Posterior vena cava (tissue), 2 donors: ENCODE measurements at regions of chrX and their contacts with region 1.

Region 1: DNA sequence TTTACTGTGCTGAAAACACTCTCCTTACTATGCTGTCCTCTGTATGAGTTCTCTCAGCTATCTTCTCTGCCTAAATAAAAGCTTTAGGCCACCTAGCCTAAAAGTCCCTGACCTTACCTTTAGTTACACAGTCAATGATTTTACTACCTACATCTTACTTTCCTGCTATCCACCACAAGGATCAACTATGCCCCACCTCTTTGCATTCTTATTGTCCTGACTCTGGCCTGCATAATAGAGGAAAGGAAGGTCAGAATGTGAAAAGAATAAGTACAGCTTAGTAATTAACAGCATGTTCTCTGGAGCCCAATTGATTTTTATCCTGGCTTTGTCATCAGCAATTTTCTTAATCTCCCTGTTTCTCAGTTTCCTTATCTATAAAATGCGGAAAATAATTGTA is 1257.8 kb downstream of the RPA4 start:
- DNase-seq: no peak

Region 2: GRCh38 chrX:98077440-98077839 is 64.0 kb before region 1 on chrX:
- intact Hi-C with region 1: no loop called
- DNase-seq: no peak

Region 3: DNA sequence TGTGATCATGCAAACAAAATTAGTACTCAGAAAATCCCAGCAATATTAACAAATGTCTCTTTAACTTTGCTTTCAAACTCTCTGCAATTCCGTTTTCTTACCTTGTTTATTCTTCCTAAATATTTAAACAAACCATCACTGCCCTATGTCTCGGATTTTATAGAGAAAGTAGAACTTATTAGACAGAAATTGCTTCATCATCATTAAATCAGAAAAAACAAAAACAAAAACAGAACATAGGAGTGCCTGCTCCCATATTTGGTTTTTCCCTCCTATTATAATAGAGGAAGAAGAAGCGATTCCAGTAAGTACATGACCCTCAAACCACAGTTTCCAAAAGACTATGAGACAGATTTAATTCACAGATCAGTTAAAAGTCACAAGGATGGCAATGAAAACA is 29.8 kb before region 1 on chrX:
- intact Hi-C with region 1: loop called in 1 of 2 experiments (anchors 2 kb)
- DNase-seq: no peak